ENCODE measurements at regions of chr1 and their contacts with region 1.

Region 1: GRCh38 chr1:28341591-28341990 is 12.8 kb downstream of the MED18 start:
- DNase-seq: no peak
- H3K4me3 Mint-ChIP-seq: no peak overlapping the region
- H3K27ac Mint-ChIP-seq: no peak overlapping the region
- H3K4me1 Mint-ChIP-seq: no peaks in the 10 kb centered on the region
- H3K27me3 Mint-ChIP-seq: no peaks in the 10 kb centered on the region
- CTCF ChIP-seq: no peak

Region 2: GRCh38 chr1:28354121-28354520 is 12.5 kb after region 1 on chr1:
- CTCF ChIA-PET with region 1: interaction called, 9 read pairs
- POLR2A ChIA-PET with region 1: interaction called, 10 read pairs
- intact Hi-C with region 1: no loop called
- DNase-seq: peak; percentile 37
- H3K4me3 Mint-ChIP-seq: no peak overlapping the region
- H3K27ac Mint-ChIP-seq: peak overlapping the region; percentile 81
- H3K4me1 Mint-ChIP-seq: peaks cover 5% of the 10 kb centered on the region
- H3K27me3 Mint-ChIP-seq: no peaks in the 10 kb centered on the region
- CTCF ChIP-seq: no peak

Measured in MCF 10A (cell line).